Natural killer cell (primary cell): ENCODE measurements at regions of chr14 and their contacts with region 1.

Region 1: GRCh38 chr14:25132732-25133422 is 82.9 kb upstream of the STXBP6 start:
- DNase-seq: peak; percentile 32 to 74
- ATAC-seq: peak; percentile 93 to 100 (median 99)
- H3K4me3 ChIP-seq: no peak overlapping the region
- H3K4me3 Mint-ChIP-seq: no peak overlapping the region
- H3K27ac ChIP-seq: no peak overlapping the region
- H3K27ac Mint-ChIP-seq: no peak overlapping the region
- H3K4me1 ChIP-seq: peaks cover 5% of the 10 kb centered on the region
- H3K4me1 Mint-ChIP-seq: peaks cover 8 to 9% of the 10 kb centered on the region in 2 donors
- H3K27me3 ChIP-seq: peaks cover 18% of the 10 kb centered on the region
- H3K27me3 Mint-ChIP-seq: peaks cover 42 to 63% of the 10 kb centered on the region in 2 donors
- CTCF ChIP-seq: peak; percentile 80

Region 2: DNA sequence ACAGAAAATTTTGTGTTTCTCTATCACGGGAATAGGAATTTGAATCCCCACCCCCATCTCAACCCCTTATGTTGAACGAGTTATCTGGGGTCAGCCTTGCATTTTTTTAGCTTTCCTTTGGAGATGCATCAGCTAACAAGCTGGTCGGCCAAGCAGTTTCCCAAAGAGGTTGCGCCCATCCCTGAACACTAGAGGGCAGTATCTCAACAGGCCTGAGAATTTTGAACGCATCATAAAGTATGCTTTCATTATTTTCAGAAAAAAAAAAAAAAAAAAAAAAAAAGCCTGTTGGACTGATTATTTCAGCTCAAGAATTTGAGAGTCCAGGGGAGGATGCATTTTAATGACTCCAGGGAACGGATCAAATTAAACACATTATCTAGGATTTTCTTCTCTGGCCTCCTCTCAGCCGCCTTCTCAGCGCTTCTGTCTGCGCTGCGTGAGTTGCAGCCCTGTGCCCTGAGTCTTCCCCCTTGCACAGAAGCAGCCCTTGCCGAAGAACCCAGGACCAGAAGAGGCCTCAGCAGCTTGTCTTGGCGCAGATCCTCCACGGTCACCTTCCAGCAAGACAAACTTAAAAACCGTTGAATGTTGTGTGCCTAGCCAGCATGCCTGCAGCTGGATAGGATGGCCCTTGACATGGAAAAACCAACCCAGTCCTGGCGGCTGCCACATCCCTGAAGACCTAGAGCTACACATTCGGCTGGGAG is 422.3 kb before region 1 on chr14:
- intact Hi-C with region 1: loop called (anchors 1 kb)
- DNase-seq: peak; percentile 55 to 77
- ATAC-seq: peak; percentile 77 to 91 (median 80)
- H3K4me3 ChIP-seq: no peak overlapping the region
- H3K4me3 Mint-ChIP-seq: no peak overlapping the region
- H3K27ac ChIP-seq: no peak overlapping the region
- H3K27ac Mint-ChIP-seq: peak overlapping the region in 1 of 2 donors; percentile 73
- H3K4me1 ChIP-seq: peaks cover 18% of the 10 kb centered on the region
- H3K4me1 Mint-ChIP-seq: peaks cover 31 to 40% of the 10 kb centered on the region in 2 donors
- H3K27me3 ChIP-seq: no peaks in the 10 kb centered on the region
- H3K27me3 Mint-ChIP-seq: peaks cover 4 to 8% of the 10 kb centered on the region in 2 donors
- CTCF ChIP-seq: peak; percentile 84

Region 3: GRCh38 chr14:25032092-25032784 is 100.6 kb before region 1 on chr14:
- intact Hi-C with region 1: no loop called
- DNase-seq: peak in 1 of 2 donors; percentile 17
- ATAC-seq: no peak
- H3K4me3 ChIP-seq: no peak overlapping the region
- H3K4me3 Mint-ChIP-seq: no peak overlapping the region
- H3K27ac ChIP-seq: no peak overlapping the region
- H3K27ac Mint-ChIP-seq: no peak overlapping the region
- H3K4me1 ChIP-seq: no peaks in the 10 kb centered on the region
- H3K4me1 Mint-ChIP-seq: no peaks in the 10 kb centered on the region
- H3K27me3 ChIP-seq: peaks cover 3% of the 10 kb centered on the region
- H3K27me3 Mint-ChIP-seq: peaks cover 4 to 8% of the 10 kb centered on the region in 2 donors
- CTCF ChIP-seq: no peak

Region 4: GRCh38 chr14:25090716-25091454 is 42.0 kb before region 1 on chr14:
- intact Hi-C with region 1: no loop called
- DNase-seq: no peak
- ATAC-seq: no peak
- H3K4me3 ChIP-seq: no peak overlapping the region
- H3K4me3 Mint-ChIP-seq: no peak overlapping the region
- H3K27ac ChIP-seq: no peak overlapping the region
- H3K27ac Mint-ChIP-seq: no peak overlapping the region
- H3K4me1 ChIP-seq: no peaks in the 10 kb centered on the region
- H3K4me1 Mint-ChIP-seq: peaks cover 0 to 4% of the 10 kb centered on the region in 2 donors
- H3K27me3 ChIP-seq: no peaks in the 10 kb centered on the region
- H3K27me3 Mint-ChIP-seq: peaks cover 38 to 81% of the 10 kb centered on the region in 2 donors
- CTCF ChIP-seq: no peak